IMR-90 (cell line): ENCODE measurements at regions of chr6 and their contacts with region 1.

Region 1: DNA sequence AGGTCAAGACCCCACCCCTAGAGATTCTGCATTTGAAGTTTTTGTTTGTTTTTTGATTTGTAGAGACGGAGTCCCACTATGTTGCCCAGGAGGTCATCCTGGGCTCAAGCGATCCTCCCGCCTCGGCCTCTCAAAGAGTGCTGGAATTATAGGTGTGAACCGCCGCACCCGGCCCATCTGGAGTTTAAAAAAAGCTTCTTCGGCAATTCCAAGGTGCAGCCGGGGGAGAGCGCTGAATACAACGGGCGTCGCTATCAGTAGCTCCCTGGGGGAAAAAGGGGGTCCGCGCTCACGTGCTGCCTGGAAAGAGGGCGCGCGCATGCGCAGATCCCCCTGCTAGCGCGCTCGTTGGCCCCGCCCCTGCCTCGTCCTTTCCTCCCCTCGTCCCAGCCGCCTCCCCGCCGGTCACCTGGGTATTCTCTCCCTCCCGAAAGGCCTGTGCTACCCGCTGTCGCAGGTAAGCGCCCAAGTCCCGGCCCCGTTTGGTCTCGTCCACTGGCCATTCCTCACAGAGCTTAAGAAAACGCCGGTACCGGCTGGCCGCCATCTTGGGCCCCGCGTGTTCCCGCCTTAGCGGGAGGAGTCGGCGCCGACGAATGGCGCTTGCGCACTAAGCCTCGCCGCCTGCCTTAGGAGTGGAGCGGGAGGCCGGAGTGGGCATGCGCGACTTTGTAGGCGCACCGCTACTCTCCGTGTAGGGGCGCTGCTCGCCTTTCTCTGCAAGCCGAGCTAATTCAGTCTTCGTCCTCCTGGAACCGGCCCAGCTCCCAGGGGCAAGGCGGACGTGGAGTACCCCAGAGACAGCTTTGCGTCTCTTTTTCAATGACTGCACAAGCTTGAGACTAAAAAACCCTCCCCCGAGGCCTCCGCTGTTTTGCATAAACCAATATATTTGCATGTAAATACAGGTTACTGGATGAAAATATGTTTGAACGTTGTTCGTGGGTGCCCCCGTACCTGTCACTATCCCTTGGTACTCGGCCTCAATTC is at the start of gene UQCC2:
- DNase-seq: peak; percentile 95
- ATAC-seq: peak; percentile 99
- H3K4me3 ChIP-seq: peak within 1 kb of the TSS; percentile 73
- H3K27ac ChIP-seq: peak within 1 kb of the TSS; percentile 95
- H3K4me1 ChIP-seq: peaks cover 5% of the 10 kb centered on the region
- H3K27me3 ChIP-seq: peaks cover 5% of the 10 kb centered on the region; the same call in 1 of the 2 replicates
- CTCF ChIP-seq: peak; percentile 90
- POLR2A ChIP-seq: peak; percentile 95
- RAD21 ChIP-seq: peak; percentile 86
- total RNA-seq, gene UQCC2: 13.8 and 23.1 TPM in 2 replicates

Region 2: GRCh38 chr6:33727932-33728331 is 16.5 kb after region 1 on chr6:
- CTCF ChIA-PET with region 1: interaction called, 10 read pairs
- POLR2A ChIA-PET with region 1: no interaction called
- dilution Hi-C with region 1: no loop called
- in situ Hi-C with region 1: no loop called
- intact Hi-C with region 1: no loop called
- DNase-seq: no peak
- ATAC-seq: no peak
- H3K4me3 ChIP-seq: no peak overlapping the region
- H3K27ac ChIP-seq: no peak overlapping the region
- H3K4me1 ChIP-seq: no peaks in the 10 kb centered on the region
- H3K27me3 ChIP-seq: peaks cover 32% of the 10 kb centered on the region
- CTCF ChIP-seq: no peak
- POLR2A ChIP-seq: no peak
- RAD21 ChIP-seq: no peak

Region 3: GRCh38 chr6:33761922-33762629 is 50.6 kb after region 1 on chr6:
- CTCF ChIA-PET with region 1: interaction called, 8 read pairs
- POLR2A ChIA-PET with region 1: no interaction called
- dilution Hi-C with region 1: no loop called
- in situ Hi-C with region 1: no loop called
- intact Hi-C with region 1: loop called (anchors 1 kb)
- DNase-seq: peak; percentile 32
- ATAC-seq: peak; percentile 80
- H3K4me3 ChIP-seq: no peak overlapping the region
- H3K27ac ChIP-seq: no peak overlapping the region
- H3K4me1 ChIP-seq: peaks cover 17% of the 10 kb centered on the region; the same call in 1 of the 2 replicates
- H3K27me3 ChIP-seq: no peaks in the 10 kb centered on the region
- CTCF ChIP-seq: peak; percentile 66
- POLR2A ChIP-seq: no peak
- RAD21 ChIP-seq: peak; percentile 70

Region 4: GRCh38 chr6:34005901-34006531 is 294.6 kb after region 1 on chr6:
- CTCF ChIA-PET with region 1: no interaction called
- POLR2A ChIA-PET with region 1: no interaction called
- dilution Hi-C with region 1: no loop called
- in situ Hi-C with region 1: no loop called
- intact Hi-C with region 1: no loop called
- DNase-seq: no peak
- ATAC-seq: no peak
- H3K4me3 ChIP-seq: no peak overlapping the region
- H3K27ac ChIP-seq: no peak overlapping the region
- H3K4me1 ChIP-seq: no peaks in the 10 kb centered on the region
- H3K27me3 ChIP-seq: peaks cover 37% of the 10 kb centered on the region
- CTCF ChIP-seq: no peak
- POLR2A ChIP-seq: no peak
- RAD21 ChIP-seq: no peak

Region 5: DNA sequence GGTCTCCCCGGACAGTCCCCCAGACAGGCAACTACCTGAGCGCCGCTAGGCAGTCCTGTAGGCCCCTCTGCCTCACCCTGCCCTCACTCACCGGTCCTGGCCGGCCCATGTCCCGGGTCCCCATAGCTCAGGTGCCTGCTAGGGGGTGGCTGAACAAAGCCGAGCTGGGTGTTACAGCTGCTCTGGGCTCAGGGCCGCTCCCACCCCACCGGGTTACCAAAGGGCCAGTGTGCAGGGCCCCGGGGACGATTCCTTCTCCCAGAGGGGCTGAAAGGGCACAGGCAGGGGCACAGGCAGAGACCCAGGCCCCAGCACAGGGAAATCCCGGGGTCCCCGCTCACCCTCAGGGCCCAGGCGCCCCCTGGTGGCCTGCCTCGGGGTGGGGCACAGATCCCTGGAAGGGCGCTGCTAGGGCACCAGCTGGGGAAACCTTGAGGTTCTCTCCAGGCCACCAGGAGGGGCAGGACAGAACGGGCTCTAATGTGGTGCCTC is 316.1 kb after region 1 on chr6:
- CTCF ChIA-PET with region 1: no interaction called
- POLR2A ChIA-PET with region 1: no interaction called
- dilution Hi-C with region 1: no loop called
- in situ Hi-C with region 1: no loop called
- intact Hi-C with region 1: loop called (anchors 2 kb)
- DNase-seq: peak; percentile 3
- ATAC-seq: peak; percentile 85
- H3K4me3 ChIP-seq: no peak overlapping the region
- H3K27ac ChIP-seq: no peak overlapping the region
- H3K4me1 ChIP-seq: no peaks in the 10 kb centered on the region
- H3K27me3 ChIP-seq: peaks cover 54% of the 10 kb centered on the region
- CTCF ChIP-seq: peak; percentile 73
- POLR2A ChIP-seq: no peak; the same call in 1 of the 2 replicates
- RAD21 ChIP-seq: peak; percentile 75